PC-9 (cell line): ENCODE measurements at regions of chr6 and their contacts with region 1.

Region 1: DNA sequence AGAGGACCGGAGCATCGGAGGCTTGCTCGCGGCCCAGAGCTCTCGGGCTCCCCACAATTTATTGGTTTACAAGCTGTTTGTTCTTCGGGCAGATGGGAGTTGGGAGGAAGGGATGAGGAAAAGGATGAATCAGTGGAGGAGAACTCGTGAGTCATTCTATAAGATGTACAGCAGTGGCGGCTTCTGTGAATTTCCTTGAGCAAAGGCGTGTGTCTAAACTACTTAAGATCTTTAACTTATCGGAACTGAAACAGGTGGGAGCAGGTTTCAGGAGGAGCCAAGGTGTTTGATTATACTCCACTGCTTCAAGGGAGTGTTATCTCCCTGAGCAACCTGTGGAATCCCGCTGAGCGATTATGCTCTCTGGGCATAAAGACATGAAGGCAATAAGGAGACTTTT is 50.5 kb upstream of the IBTK start:
- DNase-seq: peak; percentile 25 to 87
- H3K4me3 ChIP-seq: peak overlapping the region; percentile 46; the same call in 1 of the 2 replicates
- H3K27ac ChIP-seq: peak overlapping the region; percentile 74
- H3K4me1 ChIP-seq: peaks cover 8% of the 10 kb centered on the region; the same call in 1 of the 2 replicates
- H3K27me3 ChIP-seq: no peaks in the 10 kb centered on the region
- CTCF ChIP-seq: no peak

Region 2: GRCh38 chr6:82331031-82331773 is 33.2 kb after region 1 on chr6:
- CTCF ChIA-PET with region 1: no interaction called
- POLR2A ChIA-PET with region 1: no interaction called
- intact Hi-C with region 1: loop called (anchors 5 kb)
- DNase-seq: peak; percentile 30 to 89
- H3K4me3 ChIP-seq: no peak overlapping the region
- H3K27ac ChIP-seq: peak overlapping the region; percentile 24
- H3K4me1 ChIP-seq: peaks cover 21% of the 10 kb centered on the region
- H3K27me3 ChIP-seq: no peaks in the 10 kb centered on the region
- CTCF ChIP-seq: no peak